ENCODE measurements at regions of chr6 and their contacts with region 1.

Region 1: GRCh38 chr6:26596579-26597388 is at the start of gene ABT1:
- DNase-seq: peak; percentile 98
- ATAC-seq: peak; percentile 93
- H3K4me3 ChIP-seq: peak within 1 kb of the TSS; percentile 84 to 99 (median 91)
- H3K4me3 Mint-ChIP-seq: no peak within 1 kb of the TSS
- H3K27ac ChIP-seq: peak within 1 kb of the TSS; percentile 88 to 89
- H3K27ac Mint-ChIP-seq: no peak within 1 kb of the TSS
- H3K4me1 ChIP-seq: peaks cover 14 to 24% of the 10 kb centered on the region in 2 donors
- H3K4me1 Mint-ChIP-seq: peaks cover 20% of the 10 kb centered on the region
- H3K27me3 ChIP-seq: peaks cover 2 to 20% (median 9%) of the 10 kb centered on the region in 4 experiments
- H3K27me3 Mint-ChIP-seq: peaks cover 8% of the 10 kb centered on the region
- CTCF ChIP-seq: no peak
- total RNA-seq, gene ABT1: 28.6 and 29.8 TPM in 2 replicates

Region 2: DNA sequence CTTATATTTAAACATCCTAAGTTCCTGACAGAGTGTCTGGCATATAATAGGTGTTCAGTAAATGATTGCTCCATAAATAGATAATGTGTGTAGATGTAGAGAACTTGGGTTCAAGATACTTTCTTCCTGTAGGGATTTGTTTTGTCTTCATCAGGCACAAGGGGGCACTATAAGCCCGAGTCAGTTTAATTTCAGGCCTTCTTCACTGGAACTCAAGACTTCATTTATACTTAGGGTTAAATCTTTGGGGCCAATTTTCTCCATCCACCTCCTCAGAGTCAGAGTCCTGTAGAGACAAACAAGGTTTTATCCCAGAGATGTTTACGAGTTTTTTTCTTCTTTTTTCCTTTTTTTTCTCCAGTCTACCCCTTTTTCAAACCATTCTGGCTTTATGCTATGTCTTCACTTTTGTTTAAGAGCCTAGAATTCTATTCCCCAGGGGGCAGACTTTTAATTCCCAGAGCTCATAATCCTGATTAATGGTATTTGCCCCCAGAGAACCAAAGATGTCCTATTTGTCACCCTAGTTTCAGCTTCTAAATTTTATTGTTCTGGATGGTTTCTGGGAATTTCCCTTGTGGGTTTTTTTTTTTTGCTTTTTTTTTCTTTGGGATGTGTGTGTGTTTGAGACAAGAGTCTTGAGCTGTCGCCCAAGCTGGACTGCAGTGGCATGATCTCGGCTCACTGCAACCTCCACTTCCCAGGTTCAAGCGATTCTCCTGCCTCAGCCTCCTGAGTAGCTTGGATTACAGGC is 421.2 kb before region 1 on chr6:
- CTCF ChIA-PET with region 1: interaction called, 16 read pairs
- POLR2A ChIA-PET with region 1: no interaction called
- intact Hi-C with region 1: loop called (anchors 1 kb)
- DNase-seq: peak; percentile 81
- ATAC-seq: no peak
- H3K4me3 ChIP-seq: no peak overlapping the region
- H3K4me3 Mint-ChIP-seq: peak overlapping the region; percentile 21
- H3K27ac ChIP-seq: no peak overlapping the region
- H3K27ac Mint-ChIP-seq: peak overlapping the region; percentile 85
- H3K4me1 ChIP-seq: peaks cover 21 to 26% of the 10 kb centered on the region in 2 donors
- H3K4me1 Mint-ChIP-seq: peaks cover 29% of the 10 kb centered on the region
- H3K27me3 ChIP-seq: no peaks in the 10 kb centered on the region
- H3K27me3 Mint-ChIP-seq: no peaks in the 10 kb centered on the region
- CTCF ChIP-seq: peak; percentile 93

Region 3: DNA sequence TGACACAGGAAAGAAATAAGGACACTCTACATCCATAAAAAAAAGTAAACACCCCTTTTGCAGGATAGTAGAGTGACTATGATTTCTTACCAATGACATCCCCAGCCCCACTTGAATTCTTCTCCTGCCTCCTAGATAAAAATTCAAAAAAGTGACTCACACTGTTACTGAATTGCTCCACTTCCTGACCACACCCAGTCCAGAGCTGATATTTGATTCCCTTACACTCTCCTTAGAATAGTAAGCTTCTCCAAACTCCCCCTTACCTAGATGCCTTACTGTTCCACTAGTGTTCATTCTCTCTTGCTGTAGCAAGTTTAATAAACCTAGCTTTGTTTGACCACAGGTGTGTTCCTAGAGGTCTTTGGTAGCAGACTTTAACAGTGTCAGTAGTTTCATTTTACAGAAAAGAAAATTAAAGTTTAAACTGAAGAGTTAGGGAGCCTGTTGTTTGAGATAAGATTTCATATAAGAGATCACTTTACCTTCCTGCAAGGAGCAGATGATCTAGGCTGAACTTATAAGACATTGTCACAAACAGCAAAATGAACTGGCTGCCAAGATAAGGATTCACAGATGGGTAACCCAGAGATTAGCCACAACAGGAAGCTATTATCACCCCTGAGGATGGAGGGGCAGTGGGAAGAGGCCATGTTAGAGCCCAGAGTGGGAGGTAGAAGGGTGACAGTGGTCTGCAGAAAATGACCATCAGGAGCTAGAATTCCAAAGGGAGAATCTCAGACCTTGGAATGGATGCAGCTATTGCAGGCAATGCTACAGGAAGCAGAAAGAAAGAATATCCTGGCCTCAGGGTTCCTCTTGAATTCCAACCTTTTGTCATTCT is 260.2 kb before region 1 on chr6:
- CTCF ChIA-PET with region 1: interaction called, 30 read pairs
- POLR2A ChIA-PET with region 1: no interaction called
- intact Hi-C with region 1: loop called (anchors 1 kb)
- DNase-seq: no peak
- ATAC-seq: no peak
- H3K4me3 ChIP-seq: no peak overlapping the region
- H3K4me3 Mint-ChIP-seq: no peak overlapping the region
- H3K27ac ChIP-seq: no peak overlapping the region
- H3K27ac Mint-ChIP-seq: no peak overlapping the region
- H3K4me1 ChIP-seq: peaks cover 24 to 28% of the 10 kb centered on the region in 2 donors
- H3K4me1 Mint-ChIP-seq: peaks cover 22% of the 10 kb centered on the region
- H3K27me3 ChIP-seq: peaks cover 0 to 51% (median 35%) of the 10 kb centered on the region in 4 experiments
- H3K27me3 Mint-ChIP-seq: peaks cover 56% of the 10 kb centered on the region
- CTCF ChIP-seq: no peak

Region 4: GRCh38 chr6:26520853-26521599 is 75.8 kb before region 1 on chr6:
- CTCF ChIA-PET with region 1: no interaction called
- POLR2A ChIA-PET with region 1: no interaction called
- intact Hi-C with region 1: loop called (anchors 1 kb)
- DNase-seq: peak; percentile 94
- ATAC-seq: peak; percentile 64
- H3K4me3 ChIP-seq: peak overlapping the region; percentile 60 to 95 (median 74)
- H3K4me3 Mint-ChIP-seq: peak overlapping the region; percentile 84
- H3K27ac ChIP-seq: peak overlapping the region; percentile 85 to 94
- H3K27ac Mint-ChIP-seq: peak overlapping the region; percentile 91
- H3K4me1 ChIP-seq: peaks cover 17 to 20% of the 10 kb centered on the region in 2 donors
- H3K4me1 Mint-ChIP-seq: peaks cover 33% of the 10 kb centered on the region
- H3K27me3 ChIP-seq: no peaks in the 10 kb centered on the region
- H3K27me3 Mint-ChIP-seq: no peaks in the 10 kb centered on the region
- CTCF ChIP-seq: no peak

Region 5: DNA sequence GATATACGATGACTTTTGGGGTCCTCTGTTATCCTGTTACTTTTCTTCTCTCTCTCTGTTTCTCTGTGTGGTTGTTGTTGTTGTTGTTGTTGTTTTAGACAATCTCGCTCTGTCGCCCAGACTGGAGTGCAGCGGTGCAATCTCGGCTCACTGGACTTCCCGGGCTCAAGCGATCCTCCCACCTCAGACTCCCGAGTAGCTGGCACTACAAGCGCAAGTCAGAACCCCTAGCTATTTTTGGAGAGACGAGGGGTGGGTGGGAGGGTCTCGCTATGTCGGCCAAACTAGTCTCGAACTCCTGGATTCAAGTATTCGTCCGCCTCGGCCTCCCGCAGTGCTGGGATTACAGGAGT is 19.1 kb before region 1 on chr6:
- CTCF ChIA-PET with region 1: interaction called, 132 read pairs
- POLR2A ChIA-PET with region 1: no interaction called
- intact Hi-C with region 1: loop called (anchors 1 kb)
- DNase-seq: no peak
- ATAC-seq: no peak
- H3K4me3 ChIP-seq: peak overlapping the region; percentile 23 to 46 (median 41)
- H3K4me3 Mint-ChIP-seq: peak overlapping the region; percentile 73
- H3K27ac ChIP-seq: no peak overlapping the region
- H3K27ac Mint-ChIP-seq: no peak overlapping the region
- H3K4me1 ChIP-seq: peaks cover 15% of the 10 kb centered on the region in 2 donors
- H3K4me1 Mint-ChIP-seq: peaks cover 17% of the 10 kb centered on the region
- H3K27me3 ChIP-seq: peaks cover 0 to 20% (median 8%) of the 10 kb centered on the region in 4 experiments
- H3K27me3 Mint-ChIP-seq: peaks cover 15% of the 10 kb centered on the region
- CTCF ChIP-seq: no peak

Region 6: GRCh38 chr6:27479319-27480182 is 882.8 kb after region 1 on chr6:
- CTCF ChIA-PET with region 1: no interaction called
- POLR2A ChIA-PET with region 1: no interaction called
- intact Hi-C with region 1: loop called (anchors 5 kb)
- DNase-seq: peak; percentile 96
- ATAC-seq: peak; percentile 77
- H3K4me3 ChIP-seq: peak overlapping the region; percentile 88 to 97 (median 95)
- H3K4me3 Mint-ChIP-seq: no peak overlapping the region
- H3K27ac ChIP-seq: peak overlapping the region; percentile 98
- H3K27ac Mint-ChIP-seq: no peak overlapping the region
- H3K4me1 ChIP-seq: peaks cover 15 to 17% of the 10 kb centered on the region in 2 donors
- H3K4me1 Mint-ChIP-seq: peaks cover 6% of the 10 kb centered on the region
- H3K27me3 ChIP-seq: no peaks in the 10 kb centered on the region
- H3K27me3 Mint-ChIP-seq: no peaks in the 10 kb centered on the region
- CTCF ChIP-seq: no peak

Region 7: GRCh38 chr6:27871924-27872638 is 1275.3 kb after region 1 on chr6:
- CTCF ChIA-PET with region 1: interaction called, 5 read pairs
- POLR2A ChIA-PET with region 1: interaction called, 3 read pairs
- intact Hi-C with region 1: loop called (anchors 2 kb)
- DNase-seq: peak; percentile 98
- ATAC-seq: peak; percentile 76
- H3K4me3 ChIP-seq: peak overlapping the region; percentile 66 to 99 (median 76)
- H3K4me3 Mint-ChIP-seq: peak overlapping the region; percentile 84
- H3K27ac ChIP-seq: peak overlapping the region; percentile 79 to 88
- H3K27ac Mint-ChIP-seq: peak overlapping the region; percentile 98
- H3K4me1 ChIP-seq: peaks cover 20 to 34% of the 10 kb centered on the region in 2 donors
- H3K4me1 Mint-ChIP-seq: peaks cover 30% of the 10 kb centered on the region
- H3K27me3 ChIP-seq: no peaks in the 10 kb centered on the region
- H3K27me3 Mint-ChIP-seq: no peaks in the 10 kb centered on the region
- CTCF ChIP-seq: peak; percentile 56